ENCODE measurements at regions of chr12 and their contacts with region 1.

Region 1: DNA sequence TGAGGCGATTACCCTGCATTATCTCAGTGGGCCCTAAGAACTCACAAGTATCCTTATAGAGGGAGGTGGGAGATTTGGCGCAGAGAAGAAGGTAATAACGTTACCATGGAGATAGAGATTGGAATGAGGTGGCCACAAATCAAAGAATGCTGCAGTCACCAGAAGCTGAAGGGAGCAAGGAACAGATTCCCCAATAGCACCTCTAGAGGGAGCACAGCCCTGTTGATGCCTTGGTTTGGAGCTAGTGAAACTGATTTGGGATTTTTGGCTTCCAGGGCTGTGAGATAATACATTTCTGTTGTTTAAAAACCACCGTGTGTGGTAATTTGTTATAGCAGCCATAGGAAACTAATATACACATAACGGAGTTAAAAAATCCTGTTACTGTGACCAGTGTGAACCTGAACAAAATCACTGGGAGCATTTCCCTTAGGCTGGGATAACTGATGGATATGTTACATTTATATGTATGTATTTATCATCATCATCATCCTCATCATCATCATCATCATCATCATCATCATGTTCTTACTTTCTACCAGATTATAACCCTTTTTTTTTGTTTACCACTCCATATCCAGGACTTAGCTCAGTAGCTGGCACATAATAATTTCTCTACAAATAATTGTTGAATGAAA is 100.3 kb downstream of the LIN7A start:
- DNase-seq: peak; percentile 76
- ATAC-seq: peak; percentile 92
- H3K4me3 ChIP-seq: no peak overlapping the region
- H3K27ac ChIP-seq: no peak overlapping the region
- H3K4me1 ChIP-seq: peaks cover 7% of the 10 kb centered on the region
- H3K27me3 ChIP-seq: no peaks in the 10 kb centered on the region
- CTCF ChIP-seq: peak; percentile 80
- POLR2A ChIP-seq: no peak
- RAD21 ChIP-seq: peak; percentile 69

Region 2: DNA sequence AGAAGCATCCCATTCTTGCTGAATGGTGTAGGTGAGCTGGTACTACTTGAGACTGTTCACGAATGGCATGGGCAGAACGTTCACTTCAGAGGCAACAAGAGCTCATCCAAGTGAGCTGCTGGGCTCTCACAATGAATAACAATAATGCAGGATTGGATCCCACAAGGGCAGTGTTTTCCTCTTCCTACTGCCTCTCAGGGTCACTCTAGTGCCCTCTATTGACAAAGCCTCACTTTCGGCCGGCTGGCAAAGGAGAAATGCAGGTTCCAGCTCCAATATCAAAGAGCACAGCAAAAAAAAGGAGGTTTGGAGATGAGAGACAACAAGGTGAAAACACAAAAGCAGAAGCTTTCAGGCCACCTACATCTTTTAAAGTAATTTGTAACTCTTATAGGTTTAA is 204.6 kb before region 1 on chr12:
- CTCF ChIA-PET with region 1: no interaction called
- POLR2A ChIA-PET with region 1: no interaction called
- dilution Hi-C with region 1: no loop called
- in situ Hi-C with region 1: no loop called
- intact Hi-C with region 1: no loop called
- DNase-seq: no peak
- ATAC-seq: no peak
- H3K4me3 ChIP-seq: no peak overlapping the region
- H3K27ac ChIP-seq: no peak overlapping the region
- H3K4me1 ChIP-seq: no peaks in the 10 kb centered on the region
- H3K27me3 ChIP-seq: no peaks in the 10 kb centered on the region
- CTCF ChIP-seq: no peak
- POLR2A ChIP-seq: no peak
- RAD21 ChIP-seq: peak; percentile 8; the same call in 1 of the 2 replicates

Region 3: DNA sequence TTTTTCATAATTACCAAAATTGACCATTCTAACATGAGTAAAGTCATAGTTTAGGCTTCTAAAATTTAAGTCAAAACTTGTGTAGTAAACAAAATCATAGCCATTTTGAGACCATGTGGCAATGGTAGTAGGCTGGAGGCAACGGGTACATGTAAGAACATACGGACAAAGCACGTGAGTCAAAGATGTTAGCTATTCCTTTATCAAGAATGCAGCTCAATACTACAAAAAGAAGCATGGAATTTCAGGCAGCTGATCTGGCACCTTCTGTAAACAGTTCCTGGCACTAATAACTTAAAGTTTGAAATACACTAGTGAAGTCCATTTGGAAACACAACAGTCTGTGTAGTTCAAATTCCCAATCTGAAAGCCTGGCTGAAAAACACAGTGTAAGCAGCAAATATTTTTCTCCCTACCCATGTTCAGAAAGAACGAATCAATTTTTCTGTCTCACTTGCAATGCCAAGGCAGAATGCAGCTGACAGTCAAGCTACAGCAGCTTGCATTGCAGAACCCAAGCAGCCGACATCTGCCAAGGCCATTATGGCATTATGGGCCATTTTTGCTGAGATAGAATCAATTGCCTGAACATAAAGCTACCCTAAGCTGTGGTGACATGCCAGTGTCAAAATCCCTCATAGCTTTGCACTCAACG is 91.5 kb before region 1 on chr12:
- CTCF ChIA-PET with region 1: no interaction called
- POLR2A ChIA-PET with region 1: no interaction called
- dilution Hi-C with region 1: no loop called
- in situ Hi-C with region 1: no loop called
- intact Hi-C with region 1: no loop called
- DNase-seq: no peak
- ATAC-seq: no peak
- H3K4me3 ChIP-seq: no peak overlapping the region
- H3K27ac ChIP-seq: no peak overlapping the region
- H3K4me1 ChIP-seq: no peaks in the 10 kb centered on the region
- H3K27me3 ChIP-seq: no peaks in the 10 kb centered on the region
- CTCF ChIP-seq: no peak
- POLR2A ChIP-seq: no peak
- RAD21 ChIP-seq: no peak

Region 4: GRCh38 chr12:80936498-80937390 is 99.3 kb after region 1 on chr12:
- CTCF ChIA-PET with region 1: interaction called, 3 read pairs
- POLR2A ChIA-PET with region 1: no interaction called
- dilution Hi-C with region 1: no loop called
- in situ Hi-C with region 1: no loop called
- intact Hi-C with region 1: loop called (anchors 1 kb)
- DNase-seq: peak; percentile 42
- ATAC-seq: peak; percentile 81
- H3K4me3 ChIP-seq: peak overlapping the region; percentile 98
- H3K27ac ChIP-seq: peak overlapping the region; percentile 74
- H3K4me1 ChIP-seq: no peaks in the 10 kb centered on the region
- H3K27me3 ChIP-seq: no peaks in the 10 kb centered on the region
- CTCF ChIP-seq: no peak
- POLR2A ChIP-seq: no peak
- RAD21 ChIP-seq: no peak

Region 5: GRCh38 chr12:81128930-81129554 is 291.6 kb after region 1 on chr12:
- CTCF ChIA-PET with region 1: no interaction called
- POLR2A ChIA-PET with region 1: no interaction called
- dilution Hi-C with region 1: no loop called
- in situ Hi-C with region 1: no loop called
- intact Hi-C with region 1: loop called (anchors 5 kb)
- DNase-seq: peak; percentile 43
- ATAC-seq: peak; percentile 87
- H3K4me3 ChIP-seq: no peak overlapping the region
- H3K27ac ChIP-seq: no peak overlapping the region
- H3K4me1 ChIP-seq: no peaks in the 10 kb centered on the region
- H3K27me3 ChIP-seq: no peaks in the 10 kb centered on the region
- CTCF ChIP-seq: peak; percentile 72
- POLR2A ChIP-seq: no peak
- RAD21 ChIP-seq: peak; percentile 47

Region 6: GRCh38 chr12:81257947-81258551 is 420.6 kb after region 1 on chr12:
- CTCF ChIA-PET with region 1: no interaction called
- POLR2A ChIA-PET with region 1: no interaction called
- dilution Hi-C with region 1: no loop called
- in situ Hi-C with region 1: no loop called
- intact Hi-C with region 1: loop called (anchors 10 kb)
- DNase-seq: peak; percentile 47
- ATAC-seq: peak; percentile 59; the same call in 1 of the 2 replicates
- H3K4me3 ChIP-seq: no peak overlapping the region
- H3K27ac ChIP-seq: no peak overlapping the region
- H3K4me1 ChIP-seq: no peaks in the 10 kb centered on the region
- H3K27me3 ChIP-seq: no peaks in the 10 kb centered on the region
- CTCF ChIP-seq: peak; percentile 55
- POLR2A ChIP-seq: no peak
- RAD21 ChIP-seq: peak; percentile 68

Measured in IMR-90 (cell line).